Endothelial cell of umbilical vein (primary cell): ENCODE measurements at regions of chr15 and their contacts with region 1.

Region 1: GRCh38 chr15:31435261-31435911 is 108.8 kb downstream of the KLF13 start:
- DNase-seq: peak; percentile 54
- H3K4me3 ChIP-seq: peak overlapping the region in 1 of 3 experiments; percentile 50
- H3K27ac ChIP-seq: peak overlapping the region; percentile 98
- H3K4me1 ChIP-seq: peaks cover 20% of the 10 kb centered on the region
- H3K27me3 ChIP-seq: no peaks in the 10 kb centered on the region
- CTCF ChIP-seq: peak; percentile 69 to 71
- POLR2A ChIP-seq: no peak

Region 2: DNA sequence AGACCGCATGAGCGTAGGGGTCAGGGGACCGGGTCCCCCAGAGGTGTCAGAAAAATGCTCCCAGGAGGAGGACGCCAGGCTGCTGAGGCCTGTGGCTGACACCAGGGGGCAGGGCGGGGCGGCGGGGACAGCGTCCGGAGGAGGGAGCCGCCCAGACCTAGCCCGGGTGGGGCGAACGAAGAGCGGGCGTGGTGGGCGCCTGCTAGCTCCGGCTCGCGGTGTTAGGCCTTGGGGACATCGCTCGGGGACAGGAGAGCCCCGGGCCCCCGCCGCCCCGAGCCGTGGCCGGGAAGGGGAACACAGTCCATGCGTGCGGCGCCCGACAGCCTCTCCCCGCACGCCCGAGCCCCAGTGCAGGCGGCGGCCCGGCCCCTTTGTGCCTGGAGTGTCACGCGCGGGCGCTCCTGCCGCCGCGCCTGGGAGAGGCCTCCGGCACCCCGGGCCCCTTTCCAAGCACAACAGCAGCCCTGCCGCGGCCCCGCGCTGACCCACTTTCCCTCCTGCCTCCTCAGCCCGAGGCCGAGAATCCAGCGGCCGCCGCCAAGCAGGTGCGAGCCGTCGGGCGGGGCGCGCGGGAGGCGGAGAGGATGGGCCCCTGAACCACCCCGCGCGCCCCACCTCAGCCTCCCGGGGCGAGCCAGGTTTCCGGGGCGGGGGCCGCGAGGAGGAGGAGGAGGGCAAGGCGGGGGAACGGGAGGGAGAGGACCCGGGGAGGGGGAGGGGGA is 219.7 kb before region 1 on chr15:
- CTCF ChIA-PET with region 1: interaction called, 27 read pairs
- POLR2A ChIA-PET with region 1: no interaction called
- dilution Hi-C with region 1: no loop called
- intact Hi-C with region 1: loop called (anchors 1 kb)
- DNase-seq: peak; percentile 34
- H3K4me3 ChIP-seq: peak overlapping the region; percentile 30 to 45 (median 33)
- H3K27ac ChIP-seq: no peak overlapping the region
- H3K4me1 ChIP-seq: no peaks in the 10 kb centered on the region
- H3K27me3 ChIP-seq: peaks cover 7 to 8% of the 10 kb centered on the region in 2 experiments
- CTCF ChIP-seq: peak; percentile 73 to 90
- POLR2A ChIP-seq: no peak

Region 3: GRCh38 chr15:31365655-31366127 is 69.7 kb before region 1 on chr15:
- CTCF ChIA-PET with region 1: interaction called, 12 read pairs
- POLR2A ChIA-PET with region 1: no interaction called
- dilution Hi-C with region 1: no loop called
- intact Hi-C with region 1: no loop called
- DNase-seq: no peak
- H3K4me3 ChIP-seq: no peak overlapping the region
- H3K27ac ChIP-seq: no peak overlapping the region
- H3K4me1 ChIP-seq: peaks cover 7% of the 10 kb centered on the region
- H3K27me3 ChIP-seq: no peaks in the 10 kb centered on the region
- CTCF ChIP-seq: peak in 1 of 2 donors; percentile 20
- POLR2A ChIP-seq: no peak

Region 4: GRCh38 chr15:31396881-31397560 is 38.4 kb before region 1 on chr15:
- CTCF ChIA-PET with region 1: interaction called, 16 read pairs
- POLR2A ChIA-PET with region 1: interaction called, 7 read pairs
- dilution Hi-C with region 1: no loop called
- intact Hi-C with region 1: loop called (anchors 1 kb)
- DNase-seq: peak; percentile 67
- H3K4me3 ChIP-seq: no peak overlapping the region
- H3K27ac ChIP-seq: peak overlapping the region; percentile 38
- H3K4me1 ChIP-seq: peaks cover 20% of the 10 kb centered on the region
- H3K27me3 ChIP-seq: no peaks in the 10 kb centered on the region
- CTCF ChIP-seq: no peak
- POLR2A ChIP-seq: no peak

Region 5: GRCh38 chr15:32908135-32908801 is 1472.9 kb after region 1 on chr15:
- CTCF ChIA-PET with region 1: no interaction called
- POLR2A ChIA-PET with region 1: no interaction called
- dilution Hi-C with region 1: no loop called
- intact Hi-C with region 1: no loop called
- DNase-seq: peak; percentile 60
- H3K4me3 ChIP-seq: no peak overlapping the region
- H3K27ac ChIP-seq: no peak overlapping the region
- H3K4me1 ChIP-seq: no peaks in the 10 kb centered on the region
- H3K27me3 ChIP-seq: peaks cover 0 to 4% of the 10 kb centered on the region in 2 experiments
- CTCF ChIP-seq: no peak
- POLR2A ChIP-seq: no peak